ENCODE measurements at regions of chr5 and their contacts with region 1.

Region 1: GRCh38 chr5:139711067-139711905 is 63.1 kb downstream of the CXXC5 start:
- DNase-seq: peak; percentile 62 to 83 (median 67)
- H3K4me3 ChIP-seq: peak overlapping the region; percentile 78
- H3K4me3 Mint-ChIP-seq: peak overlapping the region; percentile 77 to 90 (median 79)
- H3K27ac ChIP-seq: peak overlapping the region; percentile 76
- H3K27ac Mint-ChIP-seq: peak overlapping the region; percentile 67 to 97 (median 94)
- H3K4me1 ChIP-seq: peaks cover 32% of the 10 kb centered on the region
- H3K4me1 Mint-ChIP-seq: peaks cover 26 to 50% (median 30%) of the 10 kb centered on the region in 3 donors
- H3K27me3 ChIP-seq: no peaks in the 10 kb centered on the region
- H3K27me3 Mint-ChIP-seq: no peaks in the 10 kb centered on the region

Region 2: GRCh38 chr5:139651853-139652787 is 59.2 kb before region 1 on chr5:
- CTCF ChIA-PET with region 1: interaction called, 6 read pairs
- POLR2A ChIA-PET with region 1: interaction called, 11 read pairs
- DNase-seq: peak; percentile 50 to 82 (median 72)
- H3K4me3 ChIP-seq: peak overlapping the region; percentile 38
- H3K4me3 Mint-ChIP-seq: peak overlapping the region; percentile 15 to 96 (median 70)
- H3K27ac ChIP-seq: no peak overlapping the region
- H3K27ac Mint-ChIP-seq: peak overlapping the region; percentile 12 to 91 (median 78)
- H3K4me1 ChIP-seq: peaks cover 40% of the 10 kb centered on the region
- H3K4me1 Mint-ChIP-seq: peaks cover 36 to 57% (median 48%) of the 10 kb centered on the region in 3 donors
- H3K27me3 ChIP-seq: peaks cover 39% of the 10 kb centered on the region
- H3K27me3 Mint-ChIP-seq: peaks cover 11 to 26% of the 10 kb centered on the region in 2 donors

Region 3: DNA sequence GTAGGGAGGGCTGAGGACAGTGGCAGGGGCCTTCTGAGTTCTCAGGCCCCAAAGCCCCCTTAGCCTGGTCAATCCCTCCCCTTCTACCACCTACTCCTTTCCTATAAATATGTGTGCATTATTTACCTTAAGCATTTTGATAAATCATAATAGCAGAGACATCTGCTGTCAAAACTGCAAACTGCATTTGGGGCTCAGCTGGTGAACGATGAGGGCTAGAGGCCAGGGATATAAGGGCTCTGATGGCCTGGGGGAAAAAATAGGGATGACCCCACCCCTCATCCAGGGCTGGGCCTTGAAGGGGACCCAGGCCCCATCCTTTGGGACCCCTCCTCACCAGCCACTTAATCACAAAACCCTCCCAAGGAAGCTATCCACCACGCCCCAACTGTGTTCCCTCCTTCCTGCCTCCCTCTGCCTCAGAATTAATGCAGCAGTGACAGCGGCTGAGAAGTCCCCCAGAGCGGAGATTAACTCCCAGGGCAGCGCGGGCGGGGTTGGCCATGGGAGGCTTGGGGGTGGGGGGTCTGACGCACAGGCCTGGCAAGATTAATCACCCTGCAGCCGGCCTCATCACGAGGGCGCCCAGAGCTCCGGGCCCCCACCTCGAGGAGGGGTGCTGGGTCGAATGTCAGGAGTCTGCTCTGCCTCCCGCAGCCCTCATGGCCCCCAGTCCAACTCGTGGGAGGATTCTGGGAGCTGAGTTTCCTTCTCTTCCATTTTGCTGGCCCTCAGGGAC is 21.1 kb before region 1 on chr5:
- CTCF ChIA-PET with region 1: interaction called, 19 read pairs
- POLR2A ChIA-PET with region 1: interaction called, 5 read pairs
- DNase-seq: peak in 1 of 5 donors; percentile 24
- H3K4me3 ChIP-seq: no peak overlapping the region
- H3K4me3 Mint-ChIP-seq: no peak overlapping the region
- H3K27ac ChIP-seq: no peak overlapping the region
- H3K27ac Mint-ChIP-seq: peak overlapping the region in 5 of 8 donors; percentile 15 to 72 (median 68)
- H3K4me1 ChIP-seq: no peaks in the 10 kb centered on the region
- H3K4me1 Mint-ChIP-seq: peaks cover 0 to 9% (median 4%) of the 10 kb centered on the region in 3 donors
- H3K27me3 ChIP-seq: no peaks in the 10 kb centered on the region
- H3K27me3 Mint-ChIP-seq: no peaks in the 10 kb centered on the region

Region 4: DNA sequence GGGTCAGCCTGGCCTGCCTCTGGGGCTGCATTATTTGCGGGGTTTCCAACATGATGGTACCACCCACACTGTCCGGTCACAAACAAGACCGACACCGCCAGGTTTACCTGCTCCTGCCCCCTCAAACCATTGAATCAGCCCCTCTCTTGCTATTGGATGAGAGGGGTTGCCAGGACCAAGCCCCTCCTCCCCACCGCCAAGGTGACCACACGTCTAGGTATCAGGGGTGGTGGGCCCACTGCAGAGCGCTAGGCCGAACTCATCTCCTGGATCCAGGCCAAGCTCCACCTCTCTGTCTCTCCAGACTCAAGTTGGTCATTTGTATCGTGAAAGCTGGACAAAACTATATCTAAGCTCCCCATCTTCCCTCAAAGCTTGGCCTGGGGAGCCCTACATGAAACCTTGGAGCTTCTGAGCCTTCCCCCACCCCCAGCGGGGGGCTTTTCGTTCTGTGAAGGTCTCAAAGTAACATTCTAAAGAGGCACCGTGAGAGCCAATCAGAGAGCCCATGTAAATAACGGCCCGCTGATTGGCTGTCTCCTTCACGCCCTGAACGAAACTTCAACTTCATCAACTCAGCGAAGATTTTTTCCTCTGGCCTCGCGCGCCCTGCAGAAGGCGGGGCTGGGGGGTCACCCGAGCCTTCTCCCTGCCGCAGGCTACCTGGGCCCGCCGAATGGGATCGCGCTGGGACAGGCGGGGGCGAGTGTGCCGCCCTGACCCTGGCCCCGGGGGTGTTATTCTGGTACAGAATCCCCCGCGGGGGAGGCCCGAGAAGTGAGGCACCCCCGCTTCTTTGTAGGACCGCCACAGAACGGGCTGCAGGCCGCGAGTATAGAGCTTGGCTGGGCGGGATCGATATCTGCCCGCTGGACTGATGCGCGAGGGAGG is 34.8 kb after region 1 on chr5:
- CTCF ChIA-PET with region 1: interaction called, 7 read pairs
- POLR2A ChIA-PET with region 1: interaction called, 19 read pairs
- DNase-seq: peak; percentile 33 to 74 (median 46)
- H3K4me3 ChIP-seq: peak overlapping the region; percentile 70
- H3K4me3 Mint-ChIP-seq: peak overlapping the region; percentile 87 to 91 (median 90)
- H3K27ac ChIP-seq: no peak overlapping the region
- H3K27ac Mint-ChIP-seq: peak overlapping the region; percentile 37 to 99 (median 86)
- H3K4me1 ChIP-seq: peaks cover 24% of the 10 kb centered on the region
- H3K4me1 Mint-ChIP-seq: peaks cover 16 to 34% (median 25%) of the 10 kb centered on the region in 3 donors
- H3K27me3 ChIP-seq: peaks cover 11% of the 10 kb centered on the region
- H3K27me3 Mint-ChIP-seq: no peaks in the 10 kb centered on the region

Measured in CD8-positive, alpha-beta memory T cell (primary cell).